ENCODE measurements at regions of chr3 and their contacts with region 1.

Region 1: GRCh38 chr3:111989061-111989678 is 9.6 kb upstream of the TAGLN3 start:
- DNase-seq: peak in 3 of 42 donors; percentile 44 to 62 (median 61)

Region 2: GRCh38 chr3:112043603-112044201 is 54.5 kb after region 1 on chr3:
- intact Hi-C with region 1: loop called (anchors 10 kb)
- DNase-seq: peak in 39 of 42 donors; percentile 10 to 84 (median 53)

Region 3: DNA sequence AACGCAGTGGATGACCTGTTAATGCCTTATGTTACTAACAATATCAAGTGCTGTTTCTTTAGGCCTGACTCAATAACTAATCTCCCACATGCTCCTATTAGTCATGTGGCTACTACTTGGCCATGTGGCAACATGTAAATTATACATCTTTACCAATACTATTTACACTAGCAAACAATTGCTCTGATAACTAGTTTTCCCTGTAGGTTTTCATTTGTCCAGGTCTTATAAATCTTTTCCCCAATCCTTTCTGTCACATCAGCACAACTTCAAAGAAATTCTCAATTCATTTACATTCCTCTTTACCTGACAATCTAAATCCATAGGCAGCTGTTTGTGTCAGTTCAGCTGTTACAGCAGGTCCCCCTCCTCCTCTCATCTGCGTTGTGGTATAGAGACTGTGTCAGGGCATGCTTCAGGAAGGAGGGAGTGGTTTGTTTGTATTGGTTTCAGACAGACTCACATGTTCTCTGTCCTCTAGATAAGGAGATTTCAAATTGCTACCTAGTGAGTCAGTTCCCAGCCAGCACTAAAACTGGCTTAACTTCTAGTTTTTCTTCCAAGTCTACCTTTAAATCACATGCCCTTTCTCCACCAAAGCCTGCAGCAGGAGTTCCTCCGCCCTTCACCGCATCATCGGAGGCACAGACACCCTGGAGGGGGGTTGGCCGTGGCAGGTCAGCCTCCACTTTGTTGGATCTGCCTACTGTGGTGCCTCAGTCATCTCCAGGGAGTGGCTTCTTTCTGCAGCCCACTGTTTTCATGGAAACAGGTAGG is 85.7 kb after region 1 on chr3:
- intact Hi-C with region 1: no loop called
- DNase-seq: no peak

Measured in head of caudate nucleus (tissue), 42 donors.